ENCODE measurements at regions of chr17 and their contacts with region 1.

Region 1: GRCh38 chr17:10618202-10618635 is 38.9 kb downstream of the MYH3 start:
- H3K4me3 ChIP-seq: no peak overlapping the region
- H3K27ac ChIP-seq: no peak overlapping the region
- H3K4me1 ChIP-seq: peaks cover 4% of the 10 kb centered on the region; the same call in 1 of the 2 replicates
- CTCF ChIP-seq: peak; percentile 82

Region 2: DNA sequence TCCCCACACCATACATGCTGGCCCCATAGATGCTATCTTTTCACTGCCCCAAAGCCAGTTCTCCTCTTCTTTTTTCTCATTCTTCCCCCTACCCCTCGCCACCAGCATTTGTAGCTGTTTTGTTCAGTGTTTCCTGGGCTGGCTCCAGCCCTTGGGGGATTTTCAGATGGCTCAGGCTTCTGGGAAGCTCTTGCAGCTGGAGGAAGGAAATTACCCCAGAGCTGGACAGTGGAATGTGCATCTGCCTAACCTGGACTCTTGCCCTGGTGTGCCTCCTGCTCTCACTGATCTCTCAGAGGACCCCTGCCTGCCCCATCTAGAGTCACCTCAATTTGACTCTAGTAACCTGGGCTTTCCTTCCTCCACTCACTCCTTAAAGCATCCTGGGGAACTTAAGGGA is 328.2 kb before region 1 on chr17:
- CTCF ChIA-PET with region 1: interaction called, 326 read pairs
- POLR2A ChIA-PET with region 1: no interaction called
- H3K4me3 ChIP-seq: no peak overlapping the region
- H3K27ac ChIP-seq: no peak overlapping the region
- H3K4me1 ChIP-seq: no peaks in the 10 kb centered on the region
- CTCF ChIP-seq: no peak

Region 3: GRCh38 chr17:10316801-10317542 is 301.2 kb before region 1 on chr17:
- CTCF ChIA-PET with region 1: interaction called, 164 read pairs
- POLR2A ChIA-PET with region 1: no interaction called
- H3K4me3 ChIP-seq: no peak overlapping the region
- H3K27ac ChIP-seq: no peak overlapping the region
- H3K4me1 ChIP-seq: no peaks in the 10 kb centered on the region
- CTCF ChIP-seq: no peak

Region 4: GRCh38 chr17:10523064-10523463 is 95.2 kb before region 1 on chr17:
- CTCF ChIA-PET with region 1: interaction called, 13 read pairs
- POLR2A ChIA-PET with region 1: no interaction called
- H3K4me3 ChIP-seq: no peak overlapping the region
- H3K27ac ChIP-seq: no peak overlapping the region
- H3K4me1 ChIP-seq: no peaks in the 10 kb centered on the region
- CTCF ChIP-seq: no peak

Region 5: DNA sequence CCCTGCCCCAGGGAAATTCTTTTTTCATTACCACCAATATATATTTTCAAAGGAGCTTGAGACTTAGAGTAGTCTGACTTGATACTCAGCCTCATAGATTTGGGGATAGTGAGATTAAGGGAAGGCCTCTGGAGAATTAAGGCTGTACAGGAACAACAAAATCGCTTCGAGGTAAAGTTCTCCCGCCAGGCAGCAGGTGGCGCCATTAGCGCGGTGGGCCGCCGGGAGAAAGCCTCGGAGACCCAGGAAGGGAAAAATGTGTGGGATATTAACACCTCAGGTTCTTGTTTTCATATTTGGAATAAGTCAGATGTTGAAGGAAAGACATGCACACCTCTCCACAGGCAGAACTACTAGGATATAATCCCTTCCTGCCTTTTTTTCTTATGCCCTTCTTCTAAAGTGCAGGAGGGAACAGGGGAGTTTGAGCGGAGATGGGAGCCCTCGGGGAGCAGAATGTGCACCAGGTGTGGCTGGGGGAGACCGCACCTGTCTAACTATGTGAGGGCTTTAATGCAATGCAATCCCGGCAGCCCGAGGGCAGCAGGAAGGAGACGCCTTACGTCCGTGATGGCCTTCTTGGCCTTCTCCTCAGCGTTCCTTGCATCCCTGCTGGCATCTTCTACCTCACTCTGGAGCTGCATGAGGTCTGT is 13.0 kb after region 1 on chr17:
- CTCF ChIA-PET with region 1: interaction called, 210 read pairs
- POLR2A ChIA-PET with region 1: no interaction called
- H3K4me3 ChIP-seq: no peak overlapping the region
- H3K27ac ChIP-seq: no peak overlapping the region
- H3K4me1 ChIP-seq: no peaks in the 10 kb centered on the region
- CTCF ChIP-seq: peak; percentile 49

Region 6: GRCh38 chr17:10743316-10744009 is 125.2 kb after region 1 on chr17:
- CTCF ChIA-PET with region 1: no interaction called
- POLR2A ChIA-PET with region 1: no interaction called
- H3K4me3 ChIP-seq: no peak overlapping the region
- H3K27ac ChIP-seq: no peak overlapping the region
- H3K4me1 ChIP-seq: peaks cover 4% of the 10 kb centered on the region; the same call in 1 of the 2 replicates
- CTCF ChIP-seq: no peak

Region 7: GRCh38 chr17:10758062-10758461 is 139.8 kb after region 1 on chr17:
- CTCF ChIA-PET with region 1: no interaction called
- POLR2A ChIA-PET with region 1: no interaction called
- H3K4me3 ChIP-seq: no peak overlapping the region
- H3K27ac ChIP-seq: no peak overlapping the region
- H3K4me1 ChIP-seq: no peaks in the 10 kb centered on the region
- CTCF ChIP-seq: no peak